WTC11 (cell line): ENCODE measurements at regions of chr19 and their contacts with region 1.

Region 1: GRCh38 chr19:48308631-48309586 is 16.4 kb upstream of the EMP3 start:
- DNase-seq: peak; percentile 51
- ATAC-seq: peak; percentile 85
- H3K4me3 Mint-ChIP-seq: no peak overlapping the region
- H3K27ac Mint-ChIP-seq: no peak overlapping the region
- H3K4me1 Mint-ChIP-seq: peaks cover 8% of the 10 kb centered on the region
- H3K27me3 Mint-ChIP-seq: no peaks in the 10 kb centered on the region
- CTCF ChIP-seq: no peak

Region 2: DNA sequence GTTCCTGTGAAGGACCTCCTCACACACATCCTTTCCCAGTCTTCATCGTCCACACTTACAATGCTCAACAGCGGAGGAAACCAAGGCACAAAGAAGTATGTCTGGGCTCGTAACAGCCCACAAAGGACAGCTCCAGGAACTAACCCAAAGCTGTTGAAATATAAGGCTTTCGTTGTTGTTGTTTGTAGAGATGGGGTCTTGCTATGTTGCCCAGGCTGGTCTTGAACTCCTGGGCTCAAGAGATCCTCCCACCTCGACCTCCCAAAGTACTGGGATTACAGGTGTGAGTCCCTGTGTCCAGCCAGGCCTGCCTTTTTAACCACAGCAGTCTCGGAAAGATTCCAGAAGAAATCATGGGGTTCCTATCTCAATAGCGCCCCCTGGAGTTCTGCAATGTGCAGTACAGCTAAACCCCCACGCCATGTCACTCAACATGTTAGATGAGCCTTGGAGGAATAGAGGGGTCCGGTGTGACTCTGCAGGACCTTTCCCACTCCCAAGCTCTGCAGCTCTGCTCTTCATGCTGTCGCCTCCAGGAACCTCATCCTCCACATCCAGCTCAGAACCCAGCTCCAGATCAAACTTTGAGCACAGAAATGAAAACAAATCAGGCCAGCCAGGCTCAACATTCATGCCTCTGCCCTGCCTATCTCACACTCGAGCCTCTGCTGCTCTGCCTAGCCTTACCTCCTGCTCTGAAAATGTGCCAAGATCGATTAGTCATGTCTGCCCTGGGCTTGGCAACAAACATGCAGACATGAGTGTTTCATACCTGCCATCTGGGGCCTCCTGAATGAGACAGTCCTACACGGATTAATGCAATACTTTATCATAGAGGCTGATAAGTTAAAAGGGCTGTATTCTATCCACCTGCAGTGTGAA is 205.8 kb before region 1 on chr19:
- CTCF ChIA-PET with region 1: no interaction called
- POLR2A ChIA-PET with region 1: no interaction called
- DNase-seq: peak; percentile 69
- ATAC-seq: peak; percentile 78
- H3K4me3 Mint-ChIP-seq: peak overlapping the region; percentile 56
- H3K27ac Mint-ChIP-seq: no peak overlapping the region; the same call in 1 of the 2 replicates
- H3K4me1 Mint-ChIP-seq: no peaks in the 10 kb centered on the region
- H3K27me3 Mint-ChIP-seq: peaks cover 6% of the 10 kb centered on the region; the same call in 1 of the 2 replicates
- CTCF ChIP-seq: peak; percentile 91

Region 3: GRCh38 chr19:48244281-48244680 is 64.6 kb before region 1 on chr19:
- CTCF ChIA-PET with region 1: no interaction called
- POLR2A ChIA-PET with region 1: no interaction called
- DNase-seq: no peak
- ATAC-seq: no peak
- H3K4me3 Mint-ChIP-seq: no peak overlapping the region
- H3K27ac Mint-ChIP-seq: peak overlapping the region; percentile 75
- H3K4me1 Mint-ChIP-seq: peaks cover 8% of the 10 kb centered on the region
- H3K27me3 Mint-ChIP-seq: no peaks in the 10 kb centered on the region
- CTCF ChIP-seq: no peak

Region 4: GRCh38 chr19:48271531-48272151 is 37.3 kb before region 1 on chr19:
- CTCF ChIA-PET with region 1: interaction called, 28 read pairs
- POLR2A ChIA-PET with region 1: interaction called, 6 read pairs
- DNase-seq: peak; percentile 68
- ATAC-seq: peak; percentile 76
- H3K4me3 Mint-ChIP-seq: peak overlapping the region; percentile 95
- H3K27ac Mint-ChIP-seq: peak overlapping the region; percentile 98
- H3K4me1 Mint-ChIP-seq: peaks cover 18% of the 10 kb centered on the region
- H3K27me3 Mint-ChIP-seq: no peaks in the 10 kb centered on the region; the same call in 1 of the 2 replicates
- CTCF ChIP-seq: no peak

Region 5: DNA sequence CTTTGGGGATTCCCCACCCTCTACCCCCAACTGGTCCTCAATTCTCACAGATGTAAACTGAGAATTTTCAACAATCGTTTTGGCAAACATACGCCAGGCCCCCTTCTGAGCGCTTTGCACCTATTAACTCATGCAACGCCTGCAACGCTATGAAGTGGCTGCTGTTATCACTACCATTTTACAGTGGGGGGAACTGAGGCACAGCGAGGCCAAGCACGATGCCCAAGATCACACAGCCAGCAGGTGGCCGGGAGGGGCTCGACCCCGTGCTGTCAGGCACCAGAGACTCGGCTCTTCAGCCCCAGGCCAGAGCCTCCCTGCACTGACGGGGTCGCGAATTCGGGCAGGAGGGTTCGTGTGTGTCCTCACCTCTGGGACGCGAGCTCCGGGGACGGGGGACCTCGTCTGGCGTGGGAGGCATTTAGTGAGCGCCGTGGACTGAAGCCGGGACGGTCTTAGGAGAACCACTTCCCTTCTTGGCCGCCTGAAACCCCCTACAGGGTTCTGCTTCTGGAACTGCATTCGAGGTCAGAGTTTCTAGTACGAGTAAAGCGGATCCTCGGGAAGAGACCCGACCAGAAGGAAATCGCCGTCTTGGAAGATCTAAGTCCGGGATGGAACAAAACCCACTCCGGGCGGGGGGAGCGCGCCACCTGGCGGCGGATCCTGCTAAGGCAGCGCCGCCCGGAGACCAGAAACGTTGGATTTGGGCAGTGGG is 18.0 kb before region 1 on chr19:
- CTCF ChIA-PET with region 1: interaction called, 26 read pairs
- POLR2A ChIA-PET with region 1: no interaction called
- DNase-seq: peak; percentile 88
- ATAC-seq: peak; percentile 63
- H3K4me3 Mint-ChIP-seq: peak overlapping the region; percentile 74
- H3K27ac Mint-ChIP-seq: peak overlapping the region; percentile 65; the same call in 1 of the 2 replicates
- H3K4me1 Mint-ChIP-seq: peaks cover 15% of the 10 kb centered on the region
- H3K27me3 Mint-ChIP-seq: no peaks in the 10 kb centered on the region
- CTCF ChIP-seq: peak; percentile 96

Region 6: GRCh38 chr19:48296963-48297734 is 11.8 kb before region 1 on chr19:
- CTCF ChIA-PET with region 1: interaction called, 26 read pairs
- POLR2A ChIA-PET with region 1: interaction called, 9 read pairs
- DNase-seq: no peak
- ATAC-seq: peak; percentile 76
- H3K4me3 Mint-ChIP-seq: no peak overlapping the region
- H3K27ac Mint-ChIP-seq: no peak overlapping the region
- H3K4me1 Mint-ChIP-seq: peaks cover 8% of the 10 kb centered on the region
- H3K27me3 Mint-ChIP-seq: no peaks in the 10 kb centered on the region
- CTCF ChIP-seq: no peak

Region 7: DNA sequence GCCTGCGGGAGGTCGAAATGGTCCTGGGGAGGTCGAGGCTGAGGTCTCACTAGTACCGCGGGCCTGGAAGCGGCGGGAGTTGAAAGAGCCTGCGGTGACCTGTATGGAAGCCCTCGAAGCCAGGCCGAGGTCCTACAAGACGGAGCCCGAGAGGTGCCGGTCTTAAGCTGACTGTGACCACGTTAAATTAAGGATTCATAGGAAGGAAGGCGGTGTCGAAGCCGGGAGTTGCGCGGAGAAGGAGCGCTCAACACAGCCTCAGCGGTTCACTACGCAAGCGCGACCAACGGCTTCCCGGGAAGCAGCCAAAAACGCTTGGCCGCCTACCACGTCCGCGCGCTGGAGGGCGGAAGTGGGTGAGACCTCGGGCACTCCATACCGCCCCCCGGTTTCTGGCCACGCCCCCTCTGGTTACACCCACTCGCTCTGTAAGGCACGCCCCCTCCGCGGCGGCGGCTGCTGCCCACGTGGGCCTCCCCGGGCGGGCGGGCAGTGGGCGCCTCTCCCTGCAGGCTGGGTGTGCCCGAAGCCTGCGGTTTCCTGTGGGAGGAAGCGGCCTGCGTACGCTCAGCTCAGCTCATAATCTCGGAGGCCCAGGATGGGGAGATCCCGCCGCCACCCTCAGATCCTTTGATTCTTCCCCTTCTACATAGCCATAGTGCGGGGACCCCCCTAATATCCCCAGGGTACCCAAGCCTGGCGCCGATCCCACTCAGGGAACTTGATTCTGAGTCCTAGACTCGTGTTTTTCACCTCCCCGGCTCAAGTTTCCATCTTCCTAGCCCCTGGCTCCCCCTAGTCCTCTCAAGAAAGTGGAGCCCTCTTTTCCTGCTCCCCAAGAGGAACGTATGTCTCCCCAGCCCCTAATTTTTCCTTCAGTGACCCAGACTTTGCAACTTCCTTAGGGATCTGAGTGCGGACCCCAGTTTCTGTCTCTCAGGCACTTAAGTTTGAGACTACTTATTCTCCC is 13.0 kb after region 1 on chr19:
- CTCF ChIA-PET with region 1: interaction called, 22 read pairs
- POLR2A ChIA-PET with region 1: no interaction called
- DNase-seq: peak; percentile 97
- ATAC-seq: peak; percentile 56
- H3K4me3 Mint-ChIP-seq: peak overlapping the region; percentile 91
- H3K27ac Mint-ChIP-seq: peak overlapping the region; percentile 98
- H3K4me1 Mint-ChIP-seq: peaks cover 53% of the 10 kb centered on the region
- H3K27me3 Mint-ChIP-seq: peaks cover 43% of the 10 kb centered on the region
- CTCF ChIP-seq: no peak

Region 8: DNA sequence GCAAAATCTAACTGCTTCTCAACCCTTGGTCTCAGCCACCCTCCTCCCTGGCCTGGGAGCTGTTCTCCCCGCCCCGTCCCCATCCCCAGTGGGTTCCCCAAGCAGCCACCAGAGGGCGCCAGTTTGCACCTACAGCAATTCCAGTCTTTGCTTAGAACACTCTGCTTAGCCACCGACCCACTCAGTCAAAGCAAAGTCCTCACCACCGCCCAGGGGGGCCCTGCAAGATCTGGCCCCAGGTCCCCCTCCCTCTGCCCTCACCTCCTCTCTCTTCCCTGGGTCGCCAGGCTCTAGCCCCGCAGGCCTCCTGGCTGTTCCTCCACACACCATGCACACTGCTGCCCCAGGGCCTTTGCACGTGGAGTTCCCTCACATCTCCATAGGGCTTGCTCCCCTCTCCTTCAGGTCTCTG is 42.4 kb after region 1 on chr19:
- CTCF ChIA-PET with region 1: interaction called, 11 read pairs
- POLR2A ChIA-PET with region 1: no interaction called
- DNase-seq: peak; percentile 90
- ATAC-seq: peak; percentile 90
- H3K4me3 Mint-ChIP-seq: no peak overlapping the region
- H3K27ac Mint-ChIP-seq: no peak overlapping the region
- H3K4me1 Mint-ChIP-seq: peaks cover 7% of the 10 kb centered on the region; the same call in 1 of the 2 replicates
- H3K27me3 Mint-ChIP-seq: no peaks in the 10 kb centered on the region; the same call in 1 of the 2 replicates
- CTCF ChIP-seq: peak; percentile 90